Right cardiac atrium (tissue), 5 donors: ENCODE measurements at regions of chr2 and their contacts with region 1.

Region 1: DNA sequence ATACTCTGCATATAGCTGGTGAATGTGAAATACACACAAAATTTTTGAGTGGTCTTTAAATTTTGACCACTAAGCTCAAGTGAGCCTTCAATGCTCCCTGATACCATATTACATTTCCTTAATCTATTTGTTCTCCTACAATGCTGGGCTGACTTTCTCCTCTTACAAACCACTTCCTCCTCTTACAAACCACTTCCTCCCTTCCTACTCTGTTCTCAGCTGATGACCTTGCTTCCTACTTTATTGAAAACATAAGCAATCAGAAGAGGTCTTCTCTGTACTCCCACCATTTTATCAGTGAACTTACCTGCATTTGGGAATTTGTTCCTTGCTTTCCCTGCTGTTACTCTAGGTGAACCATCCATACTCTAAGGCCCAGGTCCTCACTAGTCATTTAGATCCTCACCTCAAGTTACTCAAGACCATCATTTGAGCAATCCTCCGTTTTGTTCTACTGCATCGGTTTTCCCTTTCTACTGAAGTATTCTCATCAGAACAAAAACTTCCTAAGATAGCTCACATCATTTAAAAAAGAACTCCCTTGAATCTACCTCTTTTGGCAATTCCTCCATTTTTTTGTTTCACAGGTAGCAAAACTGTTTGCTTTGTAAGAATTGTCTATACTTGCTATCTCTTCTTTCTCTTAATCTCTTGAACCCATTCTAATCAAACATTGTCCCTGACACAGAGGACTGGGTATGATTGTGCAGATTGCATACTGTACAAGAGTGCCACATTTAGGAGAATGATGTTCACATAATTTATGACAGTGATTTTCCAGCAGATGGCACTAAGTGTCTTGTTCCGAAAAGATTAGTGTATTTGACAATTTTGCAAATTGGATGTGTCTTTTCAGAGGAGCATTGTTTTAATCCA is 96.5 kb downstream of the EPB41L5 start:
- DNase-seq: no peak
- ATAC-seq: peak; percentile 48 to 53
- H3K4me3 ChIP-seq: no peak overlapping the region
- H3K27ac ChIP-seq: no peak overlapping the region
- H3K4me1 ChIP-seq: no peaks in the 10 kb centered on the region
- H3K27me3 ChIP-seq: no peaks in the 10 kb centered on the region

Region 2: DNA sequence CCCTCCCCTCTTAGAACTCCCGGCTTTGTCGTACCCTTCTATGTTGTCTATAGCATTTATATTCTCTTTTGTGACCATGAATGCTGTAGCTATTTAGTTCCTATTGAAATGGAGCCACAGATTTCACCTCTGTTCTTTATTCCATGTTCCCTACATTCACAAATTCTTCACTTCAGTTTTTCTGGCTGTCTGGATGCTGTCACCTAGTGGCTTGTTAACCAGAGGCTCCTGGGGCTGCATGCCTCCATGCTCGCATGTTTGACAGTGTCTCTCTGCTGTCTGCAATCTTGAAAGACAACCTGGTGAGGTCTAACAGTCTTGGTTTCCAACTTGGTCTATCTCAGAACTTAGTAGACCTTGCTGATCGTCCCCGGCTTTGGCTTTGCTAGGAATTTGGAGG is 517.0 kb before region 1 on chr2:
- intact Hi-C with region 1: no loop called
- DNase-seq: no peak
- ATAC-seq: no peak
- H3K4me3 ChIP-seq: no peak overlapping the region
- H3K27ac ChIP-seq: no peak overlapping the region
- H3K4me1 ChIP-seq: no peaks in the 10 kb centered on the region
- H3K27me3 ChIP-seq: no peaks in the 10 kb centered on the region

Region 3: DNA sequence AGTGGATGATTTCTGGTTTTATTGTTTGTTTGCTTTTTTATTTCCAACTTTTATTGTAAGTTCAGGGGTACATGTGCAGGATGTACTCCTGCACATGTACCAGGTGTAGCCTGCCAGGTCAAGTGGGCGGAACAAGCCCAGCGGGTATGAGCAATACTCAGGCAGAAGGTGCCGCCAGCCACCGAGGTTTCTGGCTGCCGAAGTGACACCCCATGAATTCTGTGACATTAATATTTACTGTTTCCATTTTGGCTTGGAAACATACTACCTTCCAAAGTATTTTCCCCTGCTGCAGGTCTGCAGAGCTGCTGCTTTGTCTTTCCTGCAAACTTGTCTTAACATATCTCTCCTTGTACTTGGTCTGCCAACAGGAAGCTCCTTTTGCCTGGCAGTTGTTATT is 271.2 kb before region 1 on chr2:
- intact Hi-C with region 1: no loop called
- DNase-seq: no peak
- ATAC-seq: no peak
- H3K4me3 ChIP-seq: no peak overlapping the region
- H3K27ac ChIP-seq: no peak overlapping the region
- H3K4me1 ChIP-seq: no peaks in the 10 kb centered on the region
- H3K27me3 ChIP-seq: no peaks in the 10 kb centered on the region

Region 4: GRCh38 chr2:121088251-121089165 is 979.1 kb after region 1 on chr2:
- intact Hi-C with region 1: loop called in 1 of 4 experiments (anchors 5 kb)
- DNase-seq: peak; percentile 59 to 85 (median 77)
- ATAC-seq: peak; percentile 71
- H3K4me3 ChIP-seq: no peak overlapping the region
- H3K27ac ChIP-seq: no peak overlapping the region
- H3K4me1 ChIP-seq: no peaks in the 10 kb centered on the region
- H3K27me3 ChIP-seq: no peaks in the 10 kb centered on the region